ENCODE measurements at regions of chr4 and their contacts with region 1.

Region 1: GRCh38 chr4:8688041-8688937 is 95.7 kb downstream of the CPZ start:
- DNase-seq: peak; percentile 69
- H3K4me3 ChIP-seq: no peak overlapping the region
- H3K27ac ChIP-seq: no peak overlapping the region
- H3K4me1 ChIP-seq: no peaks in the 10 kb centered on the region
- H3K27me3 ChIP-seq: peaks cover 62% of the 10 kb centered on the region
- CTCF ChIP-seq: peak; percentile 89

Region 2: GRCh38 chr4:8260656-8261111 is 427.6 kb before region 1 on chr4:
- CTCF ChIA-PET with region 1: no interaction called
- POLR2A ChIA-PET with region 1: no interaction called
- intact Hi-C with region 1: no loop called
- DNase-seq: peak; percentile 87
- H3K4me3 ChIP-seq: no peak overlapping the region
- H3K27ac ChIP-seq: no peak overlapping the region
- H3K4me1 ChIP-seq: peaks cover 7% of the 10 kb centered on the region
- H3K27me3 ChIP-seq: no peaks in the 10 kb centered on the region
- CTCF ChIP-seq: no peak

Region 3: GRCh38 chr4:8615921-8616785 is 72.1 kb before region 1 on chr4:
- CTCF ChIA-PET with region 1: no interaction called
- POLR2A ChIA-PET with region 1: no interaction called
- intact Hi-C with region 1: no loop called
- DNase-seq: no peak
- H3K4me3 ChIP-seq: no peak overlapping the region
- H3K27ac ChIP-seq: no peak overlapping the region
- H3K4me1 ChIP-seq: no peaks in the 10 kb centered on the region
- H3K27me3 ChIP-seq: no peaks in the 10 kb centered on the region
- CTCF ChIP-seq: no peak

Region 4: GRCh38 chr4:8886612-8887406 is 198.5 kb after region 1 on chr4:
- CTCF ChIA-PET with region 1: interaction called, 11 read pairs
- POLR2A ChIA-PET with region 1: no interaction called
- intact Hi-C with region 1: loop called (anchors 1 kb)
- DNase-seq: no peak
- H3K4me3 ChIP-seq: no peak overlapping the region
- H3K27ac ChIP-seq: no peak overlapping the region
- H3K4me1 ChIP-seq: no peaks in the 10 kb centered on the region
- H3K27me3 ChIP-seq: peaks cover 53% of the 10 kb centered on the region
- CTCF ChIP-seq: peak; percentile 51

Region 5: DNA sequence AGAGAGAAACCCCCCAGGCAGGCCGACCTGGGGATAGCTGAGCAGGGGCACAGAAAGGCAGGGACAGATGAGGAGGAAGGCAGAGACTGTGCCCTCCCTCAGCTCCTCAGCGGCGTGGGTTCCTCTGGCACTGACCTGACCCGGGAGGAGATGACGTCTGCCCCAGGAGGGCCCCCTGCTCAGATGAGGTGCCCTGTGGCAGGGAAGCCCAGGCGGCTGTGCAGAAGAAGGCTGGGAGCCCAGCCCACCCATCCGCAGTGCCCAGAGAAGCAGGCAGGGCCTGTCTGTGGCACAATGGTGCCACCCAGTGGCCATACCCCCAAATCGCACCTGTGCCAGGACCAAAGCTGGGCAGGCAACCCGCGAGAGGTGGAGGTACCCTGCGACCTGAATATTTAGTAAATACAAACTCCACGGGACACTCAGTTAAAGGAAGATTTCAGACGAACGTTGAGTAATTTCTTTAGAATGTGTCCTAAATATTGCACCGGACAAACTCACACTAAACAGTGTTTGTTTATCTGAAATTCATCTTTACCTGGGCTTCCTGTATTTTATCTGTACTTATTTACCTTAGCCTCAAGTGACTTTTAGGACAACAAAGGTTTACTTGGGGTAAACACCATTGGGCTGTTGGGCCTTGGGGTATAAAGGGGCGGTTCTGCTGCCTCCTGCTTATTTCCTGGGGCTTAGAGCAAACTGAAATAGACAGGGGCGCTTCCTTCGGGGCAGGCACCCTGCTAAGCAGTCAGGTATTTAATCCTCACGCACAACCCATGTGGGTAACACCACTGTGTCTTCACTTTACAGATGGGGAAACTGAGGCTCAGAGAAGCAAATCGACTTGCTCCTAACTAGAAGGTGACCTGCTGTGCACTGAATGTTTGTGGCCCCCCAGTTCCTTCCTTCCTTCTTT is 229.8 kb after region 1 on chr4:
- CTCF ChIA-PET with region 1: interaction called, 23 read pairs
- POLR2A ChIA-PET with region 1: no interaction called
- intact Hi-C with region 1: loop called (anchors 1 kb)
- DNase-seq: peak; percentile 73
- H3K4me3 ChIP-seq: no peak overlapping the region
- H3K27ac ChIP-seq: no peak overlapping the region
- H3K4me1 ChIP-seq: no peaks in the 10 kb centered on the region
- H3K27me3 ChIP-seq: no peaks in the 10 kb centered on the region
- CTCF ChIP-seq: peak; percentile 89

Measured in A673 (cell line).